Right ventricle myocardium inferior (tissue), 1 donor: ENCODE measurements at regions of chr11 and their contacts with region 1.

Region 1: GRCh38 chr11:45964911-45965389 is 42.5 kb downstream of the LARGE2 start:
- DNase-seq: no peak
- ATAC-seq: peak; percentile 79

Region 2: GRCh38 chr11:45450189-45450588 is 514.8 kb before region 1 on chr11:
- intact Hi-C with region 1: no loop called
- DNase-seq: no peak
- ATAC-seq: no peak

Region 3: DNA sequence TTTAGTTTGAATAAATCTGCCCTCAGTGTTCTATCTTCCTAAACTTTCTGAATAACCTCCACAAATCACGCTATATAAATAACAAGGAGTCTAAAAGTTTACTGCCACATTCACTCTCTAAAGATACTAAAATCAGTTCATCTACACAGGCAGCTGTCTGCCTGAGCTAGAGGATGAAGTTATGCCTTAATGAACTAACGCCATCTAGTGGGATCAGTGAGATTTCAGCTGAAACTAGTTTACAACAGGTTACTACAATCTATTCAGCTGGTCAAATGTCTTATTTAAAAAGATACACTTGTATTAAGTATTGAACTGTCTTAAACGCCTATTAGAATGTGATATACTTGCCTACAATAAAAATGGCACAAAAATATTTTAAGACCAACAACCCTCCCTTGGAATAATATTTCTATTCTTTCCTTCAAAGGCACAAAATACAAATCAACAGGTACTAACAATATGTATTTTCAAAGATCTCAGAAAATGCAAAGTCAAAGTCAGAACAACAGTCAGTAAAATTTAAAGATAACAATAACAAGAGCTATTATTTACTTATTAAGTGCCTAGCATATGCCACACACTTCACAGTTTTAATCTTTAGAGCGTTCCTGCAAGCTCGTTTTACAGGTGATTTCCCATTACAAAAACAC is 41.6 kb after region 1 on chr11:
- intact Hi-C with region 1: loop called (anchors 1 kb)
- DNase-seq: no peak
- ATAC-seq: peak; percentile 72